Caco-2 (cell line): ENCODE measurements at regions of chr10 and their contacts with region 1.

Region 1: DNA sequence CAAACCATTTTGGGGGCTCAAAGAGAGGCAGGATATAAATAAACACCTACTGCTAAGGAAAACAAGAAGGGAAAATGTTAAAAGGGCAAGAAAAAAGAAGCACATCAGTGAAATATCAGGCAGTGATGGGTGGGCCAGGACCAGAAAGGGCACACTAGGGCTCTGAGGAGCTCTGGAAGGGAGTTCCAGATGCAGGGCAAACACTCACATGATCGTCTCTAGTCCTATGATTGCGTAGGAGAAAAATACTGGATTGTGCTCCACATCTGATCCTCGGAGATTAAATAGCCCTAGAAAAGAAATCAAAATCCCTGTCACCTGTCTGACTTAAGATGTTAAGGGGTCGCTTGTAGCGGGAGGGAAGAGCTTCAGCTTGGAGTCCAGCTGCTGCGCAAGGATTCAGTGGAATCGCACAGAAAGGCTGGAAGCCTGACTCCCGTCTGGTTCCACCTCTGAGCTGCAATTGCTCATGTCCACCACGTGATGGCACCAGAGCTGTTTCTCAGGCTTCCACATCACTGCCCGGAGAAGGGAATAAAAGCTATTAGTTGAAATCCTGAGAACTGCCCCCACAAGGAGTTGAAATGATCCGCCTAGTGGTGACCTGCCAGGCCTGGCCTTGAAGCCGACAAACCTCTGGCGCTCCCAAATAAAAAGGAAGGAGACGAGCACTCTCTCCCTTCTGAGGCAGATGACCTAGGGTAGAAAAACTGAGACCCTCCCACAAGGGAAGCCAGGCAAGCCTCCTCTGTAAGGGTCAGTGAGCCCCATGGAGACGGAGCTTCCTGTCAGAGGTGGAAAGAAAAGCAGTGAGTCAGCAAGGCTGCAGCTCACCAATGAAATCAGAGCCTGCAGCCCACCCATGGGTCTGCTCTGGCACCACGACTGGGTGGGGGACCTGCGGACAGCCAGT is 39.2 kb downstream of the XPNPEP1 start:
- DNase-seq: peak; percentile 82 to 87
- H3K4me3 ChIP-seq: no peak overlapping the region
- H3K4me3 Mint-ChIP-seq: no peak overlapping the region
- H3K27ac Mint-ChIP-seq: peak overlapping the region; percentile 83
- H3K4me1 ChIP-seq: peaks cover 11% of the 10 kb centered on the region; the same call in 1 of the 2 replicates
- H3K4me1 Mint-ChIP-seq: peaks cover 8% of the 10 kb centered on the region
- H3K27me3 ChIP-seq: no peaks in the 10 kb centered on the region
- H3K27me3 Mint-ChIP-seq: no peaks in the 10 kb centered on the region
- CTCF ChIP-seq: peak; percentile 94 to 96

Region 2: GRCh38 chr10:109899359-109900331 is 15.5 kb after region 1 on chr10:
- CTCF ChIA-PET with region 1: interaction called, 10 read pairs
- POLR2A ChIA-PET with region 1: no interaction called
- intact Hi-C with region 1: no loop called
- DNase-seq: no peak
- H3K4me3 ChIP-seq: no peak overlapping the region
- H3K4me3 Mint-ChIP-seq: no peak overlapping the region
- H3K27ac Mint-ChIP-seq: peak overlapping the region; percentile 2
- H3K4me1 ChIP-seq: no peaks in the 10 kb centered on the region
- H3K4me1 Mint-ChIP-seq: peaks cover 21% of the 10 kb centered on the region
- H3K27me3 ChIP-seq: no peaks in the 10 kb centered on the region
- H3K27me3 Mint-ChIP-seq: no peaks in the 10 kb centered on the region
- CTCF ChIP-seq: no peak

Region 3: DNA sequence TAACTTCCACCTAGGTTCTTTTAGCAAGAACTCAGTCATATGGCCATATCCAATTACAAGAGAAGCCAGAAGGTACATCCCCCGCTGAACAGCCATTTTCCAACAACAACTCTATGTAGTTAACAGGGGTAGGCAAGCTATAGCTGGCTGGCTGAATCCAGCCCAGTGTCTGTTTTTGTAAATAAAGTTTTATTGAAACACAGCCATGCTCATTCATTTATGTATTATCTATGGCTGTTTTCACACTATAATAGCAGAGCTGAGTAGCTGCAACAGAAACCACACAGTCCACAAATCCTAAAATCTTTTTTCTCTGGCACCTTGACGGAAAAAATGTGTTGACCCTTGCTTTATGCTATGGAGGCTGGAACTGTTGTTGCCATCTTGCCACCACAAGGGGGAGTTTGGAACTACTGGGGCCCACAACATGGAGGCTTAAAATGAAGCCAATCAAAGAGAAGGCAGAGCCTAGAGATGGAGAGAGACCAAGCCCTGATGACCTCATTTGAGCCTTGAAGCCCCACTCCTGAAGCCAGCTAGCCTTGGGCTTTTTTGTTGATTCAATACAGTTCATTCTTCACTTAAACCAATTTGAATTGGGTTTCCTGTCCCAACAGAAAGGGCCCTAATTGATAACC is 72.5 kb after region 1 on chr10:
- CTCF ChIA-PET with region 1: interaction called, 6 read pairs
- POLR2A ChIA-PET with region 1: no interaction called
- intact Hi-C with region 1: loop called (anchors 1 kb)
- DNase-seq: peak; percentile 63 to 67
- H3K4me3 ChIP-seq: no peak overlapping the region
- H3K4me3 Mint-ChIP-seq: no peak overlapping the region
- H3K27ac Mint-ChIP-seq: no peak overlapping the region
- H3K4me1 ChIP-seq: peaks cover 6% of the 10 kb centered on the region; the same call in 1 of the 2 replicates
- H3K4me1 Mint-ChIP-seq: peaks cover 19% of the 10 kb centered on the region
- H3K27me3 ChIP-seq: no peaks in the 10 kb centered on the region
- H3K27me3 Mint-ChIP-seq: no peaks in the 10 kb centered on the region
- CTCF ChIP-seq: peak; percentile 75 to 78

Region 4: DNA sequence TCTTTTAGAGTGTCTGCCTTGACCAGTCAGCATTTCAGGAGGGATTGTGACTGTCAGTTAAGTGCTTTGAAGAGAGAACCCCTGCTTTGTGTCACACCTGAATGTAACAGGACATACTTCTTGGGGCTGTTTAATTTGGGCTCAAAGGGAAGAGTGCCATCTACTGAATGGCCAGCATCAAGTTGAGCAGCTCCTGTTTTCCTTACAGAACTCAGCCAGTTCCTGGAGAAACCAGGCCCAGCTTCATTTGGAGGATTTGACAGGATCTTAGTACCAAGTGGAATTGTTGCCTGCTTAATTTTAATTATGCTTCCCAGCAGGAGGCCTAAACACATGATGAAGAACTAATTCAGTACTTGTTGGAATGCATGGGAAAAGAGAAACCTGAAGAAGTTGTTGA is 131.9 kb after region 1 on chr10:
- CTCF ChIA-PET with region 1: interaction called, 24 read pairs
- POLR2A ChIA-PET with region 1: no interaction called
- intact Hi-C with region 1: loop called (anchors 1 kb)
- DNase-seq: peak in 1 of 2 experiments; percentile 41
- H3K4me3 ChIP-seq: no peak overlapping the region
- H3K4me3 Mint-ChIP-seq: no peak overlapping the region
- H3K27ac Mint-ChIP-seq: no peak overlapping the region
- H3K4me1 ChIP-seq: peaks cover 30% of the 10 kb centered on the region
- H3K4me1 Mint-ChIP-seq: peaks cover 32% of the 10 kb centered on the region
- H3K27me3 ChIP-seq: no peaks in the 10 kb centered on the region
- H3K27me3 Mint-ChIP-seq: no peaks in the 10 kb centered on the region
- CTCF ChIP-seq: peak in 1 of 2 experiments; percentile 51

Region 5: GRCh38 chr10:110103921-110104461 is 219.9 kb after region 1 on chr10:
- CTCF ChIA-PET with region 1: interaction called, 3 read pairs
- POLR2A ChIA-PET with region 1: no interaction called
- intact Hi-C with region 1: loop called (anchors 1 kb)
- DNase-seq: no peak
- H3K4me3 ChIP-seq: no peak overlapping the region
- H3K4me3 Mint-ChIP-seq: no peak overlapping the region
- H3K27ac Mint-ChIP-seq: no peak overlapping the region
- H3K4me1 ChIP-seq: no peaks in the 10 kb centered on the region
- H3K4me1 Mint-ChIP-seq: peaks cover 11% of the 10 kb centered on the region
- H3K27me3 ChIP-seq: no peaks in the 10 kb centered on the region
- H3K27me3 Mint-ChIP-seq: no peaks in the 10 kb centered on the region
- CTCF ChIP-seq: peak in 1 of 2 experiments; percentile 14

Region 6: GRCh38 chr10:110279407-110279986 is 395.4 kb after region 1 on chr10:
- CTCF ChIA-PET with region 1: no interaction called
- POLR2A ChIA-PET with region 1: no interaction called
- intact Hi-C with region 1: loop called (anchors 1 kb)
- DNase-seq: peak; percentile 53 to 62
- H3K4me3 ChIP-seq: no peak overlapping the region
- H3K4me3 Mint-ChIP-seq: peak overlapping the region; percentile 19
- H3K27ac Mint-ChIP-seq: no peak overlapping the region
- H3K4me1 ChIP-seq: no peaks in the 10 kb centered on the region
- H3K4me1 Mint-ChIP-seq: no peaks in the 10 kb centered on the region
- H3K27me3 ChIP-seq: no peaks in the 10 kb centered on the region
- H3K27me3 Mint-ChIP-seq: no peaks in the 10 kb centered on the region
- CTCF ChIP-seq: peak; percentile 65 to 83